ENCODE measurements at regions of chr4 and their contacts with region 1.

Region 1: GRCh38 chr4:139030614-139031235 is 15.1 kb downstream of the NOCT start:
- DNase-seq: peak; percentile 56 to 85 (median 60)
- ATAC-seq: peak; percentile 84
- H3K4me3 ChIP-seq: no peak overlapping the region
- H3K27ac ChIP-seq: no peak overlapping the region
- H3K4me1 ChIP-seq: peaks cover 0 to 3% of the 10 kb centered on the region in 2 experiments; a peak in 2 of 5 replicates
- H3K27me3 ChIP-seq: no peaks in the 10 kb centered on the region
- CTCF ChIP-seq: peak; percentile 71 to 91 (median 82)
- EP300 ChIP-seq: no peak
- POLR2A ChIP-seq: no peak
- RAD21 ChIP-seq: peak; percentile 72 to 79

Region 2: GRCh38 chr4:139083956-139084803 is 53.5 kb after region 1 on chr4:
- CTCF ChIA-PET with region 1: no interaction called
- POLR2A ChIA-PET with region 1: no interaction called
- in situ Hi-C with region 1: no loop called
- intact Hi-C with region 1: loop called (anchors 2 kb)
- DNase-seq: peak; percentile 70 to 92 (median 75)
- ATAC-seq: peak; percentile 72
- H3K4me3 ChIP-seq: peak overlapping the region; percentile 85
- H3K27ac ChIP-seq: peak overlapping the region; percentile 98
- H3K4me1 ChIP-seq: peaks cover 6 to 8% of the 10 kb centered on the region in 2 experiments; a peak in 4 of 5 replicates
- H3K27me3 ChIP-seq: no peaks in the 10 kb centered on the region
- CTCF ChIP-seq: peak in 2 of 3 experiments; percentile 16 to 46; a peak in 2 of 6 replicates
- EP300 ChIP-seq: no peak
- POLR2A ChIP-seq: peak; percentile 85
- RAD21 ChIP-seq: no peak

Region 3: GRCh38 chr4:139229534-139230039 is 198.9 kb after region 1 on chr4:
- CTCF ChIA-PET with region 1: no interaction called
- POLR2A ChIA-PET with region 1: no interaction called
- in situ Hi-C with region 1: no loop called
- intact Hi-C with region 1: loop called (anchors 1 kb)
- DNase-seq: peak; percentile 27 to 61 (median 34)
- ATAC-seq: peak; percentile 81
- H3K4me3 ChIP-seq: no peak overlapping the region
- H3K27ac ChIP-seq: no peak overlapping the region
- H3K4me1 ChIP-seq: peaks cover 0 to 2% of the 10 kb centered on the region in 2 experiments; a peak in 1 of 5 replicates
- H3K27me3 ChIP-seq: no peaks in the 10 kb centered on the region
- CTCF ChIP-seq: peak; percentile 53 to 79 (median 53); a peak in 4 of 6 replicates
- EP300 ChIP-seq: no peak
- POLR2A ChIP-seq: no peak
- RAD21 ChIP-seq: peak; percentile 59 to 77

Region 4: GRCh38 chr4:139530833-139531427 is 500.2 kb after region 1 on chr4:
- CTCF ChIA-PET with region 1: interaction called, 8 read pairs
- POLR2A ChIA-PET with region 1: no interaction called
- in situ Hi-C with region 1: loop called (anchors 25 kb)
- intact Hi-C with region 1: loop called (anchors 10 kb)
- DNase-seq: peak; percentile 61 to 75 (median 68)
- ATAC-seq: peak; percentile 95
- H3K4me3 ChIP-seq: no peak overlapping the region
- H3K27ac ChIP-seq: no peak overlapping the region
- H3K4me1 ChIP-seq: no peaks in the 10 kb centered on the region
- H3K27me3 ChIP-seq: peaks cover 2 to 9% of the 10 kb centered on the region in 2 experiments; a peak in 2 of 5 replicates
- CTCF ChIP-seq: peak; percentile 81 to 92 (median 81)
- EP300 ChIP-seq: no peak
- POLR2A ChIP-seq: no peak
- RAD21 ChIP-seq: peak; percentile 59 to 69

Measured in K562 (cell line).